ENCODE measurements at regions of chr16 and their contacts with region 1.

Region 1: DNA sequence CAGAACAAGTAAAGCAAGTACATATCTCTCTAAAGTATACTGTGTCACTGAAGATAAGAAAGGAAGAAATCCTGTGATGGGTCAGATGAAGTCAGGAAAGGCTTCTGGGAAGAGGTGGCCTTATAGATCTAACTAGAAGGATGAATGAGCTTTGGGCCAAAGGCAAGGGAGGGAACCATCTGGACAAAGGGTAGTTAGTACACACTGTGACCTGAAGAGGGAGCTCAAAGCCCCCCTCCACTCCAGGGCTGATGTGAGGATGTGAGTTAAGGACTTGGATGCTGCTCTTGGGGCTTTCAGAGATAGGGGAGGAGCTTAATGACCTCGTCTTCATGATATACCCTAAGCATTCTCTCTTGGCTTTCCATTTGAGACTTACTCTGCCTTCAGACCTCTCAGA is 185.3 kb upstream of the CACNG3 start:
- DNase-seq: peak; percentile 29
- ATAC-seq: peak; percentile 86
- H3K4me3 ChIP-seq: no peak overlapping the region
- H3K27ac ChIP-seq: no peak overlapping the region
- H3K4me1 ChIP-seq: no peaks in the 10 kb centered on the region
- H3K27me3 ChIP-seq: no peaks in the 10 kb centered on the region; a peak in 1 of 5 replicates
- CTCF ChIP-seq: peak; percentile 77
- EP300 ChIP-seq: no peak
- POLR2A ChIP-seq: no peak
- RAD21 ChIP-seq: peak; percentile 29; the same call in 1 of the 2 replicates

Region 2: GRCh38 chr16:24253192-24253591 is 182.3 kb after region 1 on chr16:
- CTCF ChIA-PET with region 1: no interaction called
- POLR2A ChIA-PET with region 1: no interaction called
- in situ Hi-C with region 1: loop called (anchors 10 kb)
- intact Hi-C with region 1: no loop called
- DNase-seq: peak; percentile 47
- ATAC-seq: peak; percentile 93
- H3K4me3 ChIP-seq: no peak overlapping the region
- H3K27ac ChIP-seq: no peak overlapping the region
- H3K4me1 ChIP-seq: no peaks in the 10 kb centered on the region
- H3K27me3 ChIP-seq: peaks cover 0 to 4% of the 10 kb centered on the region in 2 experiments; a peak in 1 of 5 replicates
- CTCF ChIP-seq: peak; percentile 79
- EP300 ChIP-seq: no peak
- POLR2A ChIP-seq: no peak
- RAD21 ChIP-seq: peak; percentile 48; the same call in 1 of the 2 replicates